ENCODE measurements at regions of chr19 and their contacts with region 1.

Region 1: DNA sequence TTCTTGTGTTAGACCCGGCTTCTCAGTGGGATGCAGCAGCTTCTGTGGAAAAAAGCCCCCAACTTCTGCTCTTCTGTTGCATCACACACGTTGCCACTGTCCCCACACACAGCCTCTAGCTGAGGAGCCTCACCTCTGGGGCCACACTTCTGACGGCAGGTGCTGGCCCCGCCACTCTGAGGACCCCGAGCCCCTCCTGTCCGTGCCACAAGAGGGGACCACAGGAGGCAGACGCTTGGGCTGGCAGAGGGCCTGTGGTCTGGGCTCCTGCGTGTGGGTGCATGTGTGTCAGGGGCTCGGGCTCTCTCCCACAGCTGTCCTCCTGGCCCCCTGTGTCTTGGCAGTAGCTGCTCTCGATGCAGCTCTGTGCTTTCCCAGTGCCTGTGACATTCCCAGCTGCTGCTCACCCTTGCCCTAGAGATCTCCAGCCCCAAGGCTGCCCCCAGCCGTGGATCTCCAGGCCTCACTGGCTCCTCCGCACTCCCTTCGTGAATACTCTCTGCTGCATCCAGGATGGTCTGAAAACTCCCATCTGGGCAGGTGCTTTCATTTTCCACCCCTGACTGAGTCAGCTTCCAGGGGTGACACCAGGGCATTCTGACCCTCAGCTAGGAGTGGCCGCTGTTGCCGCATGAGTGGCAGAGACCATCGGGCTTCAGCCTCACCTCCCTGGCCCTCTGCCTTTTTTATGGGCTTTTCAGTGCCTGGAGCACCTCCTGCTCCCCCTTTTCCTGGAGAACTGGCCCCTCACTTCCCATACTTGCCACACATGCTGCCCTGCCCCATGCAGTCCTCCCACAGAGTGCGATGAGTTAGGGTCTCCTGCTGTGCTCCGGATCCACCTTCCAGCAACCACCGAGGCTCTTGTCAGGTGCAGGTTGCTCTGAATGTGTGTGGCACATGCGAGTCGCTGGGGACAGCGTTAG is 13.7 kb downstream of the MAU2 start:
- H3K4me3 ChIP-seq: no peak overlapping the region
- H3K27ac ChIP-seq: no peak overlapping the region
- H3K4me1 ChIP-seq: no peaks in the 10 kb centered on the region
- CTCF ChIP-seq: no peak

Region 2: DNA sequence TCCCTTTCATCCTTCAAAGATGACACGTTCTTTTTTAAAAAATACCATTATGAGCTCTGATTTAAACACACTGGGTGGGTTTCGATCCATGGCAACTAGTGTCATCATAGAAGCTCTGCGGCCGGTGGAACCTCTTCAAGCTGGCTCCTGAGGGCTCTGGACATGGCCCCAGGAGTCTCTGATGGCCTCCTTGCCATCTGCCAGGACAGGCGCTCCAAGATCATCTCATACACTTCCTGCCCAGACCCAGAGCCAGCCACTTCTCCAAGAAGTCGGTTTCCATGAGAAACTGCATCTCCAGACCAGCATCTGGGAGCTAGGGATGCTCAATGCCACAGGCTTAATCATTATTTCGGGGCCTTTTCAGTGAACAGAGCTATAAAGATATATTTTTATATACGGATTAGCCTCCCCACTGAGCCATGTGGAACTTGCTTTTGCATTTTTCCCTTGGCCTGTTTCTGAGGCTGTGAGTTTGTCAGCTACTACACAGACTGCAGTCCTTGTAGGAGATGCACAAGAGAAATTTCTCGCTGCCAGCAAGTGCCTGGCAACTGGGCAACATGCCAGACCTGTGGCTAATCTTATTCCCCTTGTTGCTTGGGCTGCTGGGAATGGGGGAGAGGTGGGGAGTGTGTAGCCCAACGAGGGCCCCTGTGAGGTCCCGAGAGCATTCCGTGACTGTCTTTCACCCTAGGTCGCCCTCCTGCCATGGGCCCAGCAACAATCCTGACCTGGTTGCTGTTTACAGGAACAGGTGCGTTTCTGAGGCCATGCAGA is 29.9 kb before region 1 on chr19:
- CTCF ChIA-PET with region 1: no interaction called
- POLR2A ChIA-PET with region 1: no interaction called
- H3K4me3 ChIP-seq: no peak overlapping the region
- H3K27ac ChIP-seq: 0 out of 2 replicates have a peak overlapping the region, but pooled peaks have one; percentile 9
- H3K4me1 ChIP-seq: no peaks in the 10 kb centered on the region
- CTCF ChIP-seq: no peak

Region 3: DNA sequence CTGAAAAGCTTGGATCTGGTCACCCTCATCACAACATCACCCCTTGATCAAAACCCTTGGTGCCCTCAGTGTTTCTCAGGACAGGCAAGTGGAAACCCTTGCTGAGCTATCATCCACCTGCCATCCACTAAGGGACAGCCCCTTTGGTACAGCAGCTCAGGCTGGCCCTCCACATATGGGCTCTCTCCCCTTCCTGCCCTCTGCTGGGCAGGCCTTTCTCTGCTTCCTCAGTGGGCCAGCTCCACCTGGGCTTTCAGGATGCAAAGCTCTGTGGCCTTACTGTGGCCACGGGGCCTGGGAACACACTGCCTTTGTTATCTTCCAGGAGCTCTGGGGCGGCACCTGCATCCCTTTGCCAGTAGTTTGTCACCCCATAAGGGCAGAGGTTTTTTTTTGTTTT is 18.9 kb before region 1 on chr19:
- CTCF ChIA-PET with region 1: no interaction called
- POLR2A ChIA-PET with region 1: interaction called, 13 read pairs
- H3K4me3 ChIP-seq: no peak overlapping the region
- H3K27ac ChIP-seq: no peak overlapping the region
- H3K4me1 ChIP-seq: peaks cover 3% of the 10 kb centered on the region; the same call in 1 of the 2 replicates
- CTCF ChIP-seq: no peak

Measured in HEK293 (cell line).